Posterior cingulate gyrus (tissue), 11 donors: ENCODE measurements at regions of chr19 and their contacts with region 1.

Region 1: GRCh38 chr19:13356686-13357280 is 149.5 kb downstream of the CACNA1A start:
- DNase-seq: peak in 1 of 10 donors; percentile 70

Region 2: DNA sequence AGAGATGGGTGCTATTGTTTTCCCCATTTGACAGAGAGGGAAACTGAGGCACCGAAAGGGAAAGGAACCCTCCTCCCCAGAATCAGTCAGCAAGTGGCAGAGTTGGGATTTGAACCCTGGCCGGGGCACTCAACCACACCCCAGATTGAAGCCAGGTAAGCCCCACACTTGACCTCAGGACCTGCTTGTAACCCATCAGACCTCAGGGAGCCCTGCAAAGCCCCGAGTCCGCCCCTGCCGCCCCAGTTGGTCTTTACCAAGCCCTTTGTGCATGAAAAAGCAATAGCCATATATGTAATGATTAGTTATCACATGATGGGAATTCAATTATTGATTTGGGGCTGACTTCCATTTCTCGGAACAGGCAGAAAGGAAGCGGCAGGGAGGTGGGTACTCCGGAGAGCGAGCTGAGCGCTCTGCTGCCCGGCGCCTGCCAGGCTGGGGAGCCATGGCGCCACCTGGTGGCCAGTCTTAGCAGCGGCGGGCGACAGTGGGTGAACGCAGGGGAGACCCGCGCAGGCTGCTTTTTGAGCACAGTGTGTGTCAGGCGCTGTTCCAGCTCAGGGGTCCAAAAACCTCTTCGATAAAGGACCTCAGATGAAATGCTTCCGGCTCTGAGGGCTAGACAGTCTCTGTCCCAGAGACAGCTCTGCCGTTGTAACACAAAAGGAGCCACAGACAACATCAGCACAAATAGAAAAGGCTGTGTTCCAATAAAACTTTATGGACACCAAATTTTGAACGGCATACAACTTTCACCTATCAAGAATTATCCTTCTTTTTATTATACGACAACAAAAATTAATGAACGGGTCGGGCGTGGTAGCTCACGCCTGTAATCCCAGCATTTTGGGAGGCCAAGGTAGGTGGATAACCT is 232.4 kb after region 1 on chr19:
- intact Hi-C with region 1: loop called (anchors 10 kb)
- DNase-seq: peak; percentile 62 to 97 (median 80)